ENCODE measurements at regions of chr20 and their contacts with region 1.

Region 1: DNA sequence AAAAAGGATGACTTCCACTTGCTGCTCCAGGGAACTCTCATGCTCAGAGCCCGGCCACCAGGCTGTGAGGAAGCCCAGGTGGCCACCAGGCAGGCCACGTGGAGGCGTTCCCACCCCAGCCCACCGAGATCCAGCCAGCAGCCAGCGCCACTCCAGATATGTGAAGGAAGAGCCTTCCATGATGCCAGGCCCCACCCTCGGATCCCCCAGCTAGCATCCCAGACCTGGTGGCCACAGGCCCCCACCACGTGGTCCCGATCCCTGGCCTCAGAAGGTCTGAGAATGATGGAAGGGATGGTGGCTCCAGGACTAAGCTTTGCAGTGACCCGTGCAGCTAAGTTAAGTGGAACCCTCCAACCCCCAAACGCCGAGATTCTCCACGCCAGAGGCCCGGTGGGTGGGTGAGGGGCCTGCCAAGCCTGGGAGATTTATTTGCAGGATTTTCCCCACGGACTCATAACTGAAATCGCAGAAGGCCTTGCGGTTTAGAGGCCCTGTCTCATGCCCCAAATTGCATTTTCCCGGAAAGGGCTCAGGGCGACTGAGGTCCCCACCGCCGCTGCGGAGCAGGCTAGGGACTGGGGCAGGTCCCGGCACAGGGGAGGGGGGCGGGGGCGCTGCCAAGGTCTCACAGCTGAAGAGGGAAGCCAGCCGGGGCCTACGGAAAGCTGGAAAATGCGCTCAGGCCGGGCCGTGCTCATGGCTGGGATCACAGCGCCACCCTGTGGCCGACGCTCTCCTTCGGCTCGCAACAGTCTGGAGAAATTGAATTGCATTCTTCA is 31.1 kb upstream of the CST7 start:
- DNase-seq: peak; percentile 54
- H3K4me3 ChIP-seq: no peak overlapping the region
- H3K27ac ChIP-seq: no peak overlapping the region
- H3K4me1 ChIP-seq: no peaks in the 10 kb centered on the region
- H3K27me3 ChIP-seq: no peaks in the 10 kb centered on the region
- CTCF ChIP-seq: peak; percentile 87

Region 2: GRCh38 chr20:23937303-23938117 is 980.5 kb before region 1 on chr20:
- intact Hi-C with region 1: loop called (anchors 5 kb)
- DNase-seq: peak; percentile 35
- H3K4me3 ChIP-seq: no peak overlapping the region
- H3K27ac ChIP-seq: no peak overlapping the region
- H3K4me1 ChIP-seq: no peaks in the 10 kb centered on the region
- H3K27me3 ChIP-seq: no peaks in the 10 kb centered on the region
- CTCF ChIP-seq: peak; percentile 55

Region 3: GRCh38 chr20:24160563-24161375 is 757.2 kb before region 1 on chr20:
- intact Hi-C with region 1: loop called (anchors 5 kb)
- DNase-seq: peak; percentile 37
- H3K4me3 ChIP-seq: no peak overlapping the region
- H3K27ac ChIP-seq: no peak overlapping the region
- H3K4me1 ChIP-seq: no peaks in the 10 kb centered on the region
- H3K27me3 ChIP-seq: no peaks in the 10 kb centered on the region
- CTCF ChIP-seq: peak; percentile 58

Region 4: GRCh38 chr20:24303381-24303780 is 614.6 kb before region 1 on chr20:
- intact Hi-C with region 1: loop called (anchors 5 kb)
- DNase-seq: no peak
- H3K4me3 ChIP-seq: no peak overlapping the region
- H3K27ac ChIP-seq: no peak overlapping the region
- H3K4me1 ChIP-seq: no peaks in the 10 kb centered on the region
- H3K27me3 ChIP-seq: no peaks in the 10 kb centered on the region
- CTCF ChIP-seq: no peak